ENCODE measurements at regions of chr22 and their contacts with region 1.

Region 1: DNA sequence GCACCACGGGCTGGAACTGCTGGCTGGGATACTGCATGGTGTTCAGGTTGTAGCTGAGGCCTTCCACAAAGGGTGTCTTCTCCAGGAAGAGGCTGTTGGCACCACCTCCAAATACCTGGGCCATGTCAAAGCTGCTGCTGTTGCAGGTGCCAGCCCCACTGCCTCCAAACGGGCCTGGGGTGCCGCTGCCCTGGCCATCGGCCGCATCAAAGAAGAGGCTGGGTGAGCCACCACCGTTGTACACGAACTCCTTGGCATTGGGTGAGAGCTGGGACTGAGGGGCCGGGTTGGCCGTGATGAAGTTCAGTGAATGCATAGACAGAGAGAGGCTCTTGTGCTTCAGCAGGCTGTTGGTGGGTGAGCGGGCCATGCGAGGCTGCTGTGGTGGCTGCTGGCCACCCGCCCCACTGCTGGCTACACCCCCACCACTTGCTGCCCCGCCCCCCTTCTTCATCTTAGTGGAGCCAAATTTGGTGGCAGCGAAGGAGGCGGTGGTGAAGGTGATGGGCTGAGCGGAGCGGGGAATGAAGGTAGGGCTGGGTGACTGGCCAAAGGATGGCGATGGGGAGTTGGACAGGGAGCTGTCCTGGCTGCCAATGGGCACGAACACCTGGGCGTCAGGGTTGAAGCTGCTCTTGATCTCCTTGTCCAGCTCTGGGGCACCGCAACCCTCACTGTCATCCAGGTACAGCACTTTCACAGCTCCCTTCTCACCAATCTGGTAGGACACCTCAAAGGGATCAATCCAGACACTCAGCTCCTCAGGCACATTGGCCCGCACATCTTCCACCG is 10.1 kb downstream of the TOB2 start:
- DNase-seq: no peak
- ATAC-seq: no peak
- H3K4me3 Mint-ChIP-seq: no peak overlapping the region
- H3K27ac Mint-ChIP-seq: no peak overlapping the region
- H3K4me1 Mint-ChIP-seq: peaks cover 16% of the 10 kb centered on the region
- H3K27me3 Mint-ChIP-seq: no peaks in the 10 kb centered on the region
- CTCF ChIP-seq: no peak

Region 2: GRCh38 chr22:41448189-41448808 is 11.8 kb after region 1 on chr22:
- CTCF ChIA-PET with region 1: no interaction called
- POLR2A ChIA-PET with region 1: interaction called, 23 read pairs
- intact Hi-C with region 1: no loop called
- DNase-seq: peak; percentile 95
- ATAC-seq: peak; percentile 67
- H3K4me3 Mint-ChIP-seq: peak overlapping the region; percentile 90
- H3K27ac Mint-ChIP-seq: peak overlapping the region; percentile 99
- H3K4me1 Mint-ChIP-seq: peaks cover 10% of the 10 kb centered on the region
- H3K27me3 Mint-ChIP-seq: no peaks in the 10 kb centered on the region
- CTCF ChIP-seq: no peak

Measured in activated CD8-positive, alpha-beta T cell treated with anti-CD3 and anti-CD28 coated beads for 36 hours (primary cell).